ENCODE measurements at regions of chr19 and their contacts with region 1.

Region 1: DNA sequence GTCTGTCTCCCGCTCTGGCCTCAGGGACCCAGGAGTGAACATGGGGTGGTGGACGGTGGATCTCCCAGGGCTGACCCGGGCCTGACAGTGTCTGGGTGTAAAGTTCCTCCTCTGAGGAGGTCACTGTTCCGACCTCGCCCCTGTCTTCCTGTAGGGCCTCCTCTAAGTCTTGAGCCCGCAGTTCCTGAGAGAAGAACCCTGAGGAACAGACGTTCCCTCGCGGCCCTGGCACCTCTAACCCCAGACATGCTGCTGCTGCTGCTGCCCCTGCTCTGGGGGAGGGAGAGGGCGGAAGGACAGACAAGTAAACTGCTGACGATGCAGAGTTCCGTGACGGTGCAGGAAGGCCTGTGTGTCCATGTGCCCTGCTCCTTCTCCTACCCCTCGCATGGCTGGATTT is at the start of gene SIGLEC9:
- DNase-seq: peak; percentile 89
- total RNA-seq, gene SIGLEC9: 8.7 to 12.6 TPM

Region 2: DNA sequence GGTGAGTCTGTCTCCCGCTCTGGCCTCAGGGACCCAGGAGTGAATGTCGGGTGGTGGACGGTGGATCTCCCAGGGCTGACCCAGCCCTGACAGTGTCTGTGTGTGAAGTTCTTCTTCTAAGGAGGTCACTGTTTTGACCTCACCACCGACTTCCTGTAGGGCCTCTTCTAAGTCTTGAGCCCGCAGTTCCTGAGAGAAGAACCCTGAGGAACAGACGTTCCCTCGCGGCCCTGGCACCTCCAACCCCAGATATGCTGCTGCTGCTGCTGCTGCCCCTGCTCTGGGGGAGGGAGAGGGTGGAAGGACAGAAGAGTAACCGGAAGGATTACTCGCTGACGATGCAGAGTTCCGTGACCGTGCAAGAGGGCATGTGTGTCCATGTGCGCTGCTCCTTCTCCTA is 17.4 kb after region 1 on chr19 and contains the start of gene SIGLEC7:
- intact Hi-C with region 1: loop called in 1 of 2 experiments (anchors 2 kb)
- DNase-seq: no peak
- total RNA-seq, gene SIGLEC7: 1.8 to 5.5 TPM

Measured in posterior vena cava (tissue), 2 donors.